CD8-positive, alpha-beta memory T cell (primary cell): ENCODE measurements at regions of chr4 and their contacts with region 1.

Region 1: DNA sequence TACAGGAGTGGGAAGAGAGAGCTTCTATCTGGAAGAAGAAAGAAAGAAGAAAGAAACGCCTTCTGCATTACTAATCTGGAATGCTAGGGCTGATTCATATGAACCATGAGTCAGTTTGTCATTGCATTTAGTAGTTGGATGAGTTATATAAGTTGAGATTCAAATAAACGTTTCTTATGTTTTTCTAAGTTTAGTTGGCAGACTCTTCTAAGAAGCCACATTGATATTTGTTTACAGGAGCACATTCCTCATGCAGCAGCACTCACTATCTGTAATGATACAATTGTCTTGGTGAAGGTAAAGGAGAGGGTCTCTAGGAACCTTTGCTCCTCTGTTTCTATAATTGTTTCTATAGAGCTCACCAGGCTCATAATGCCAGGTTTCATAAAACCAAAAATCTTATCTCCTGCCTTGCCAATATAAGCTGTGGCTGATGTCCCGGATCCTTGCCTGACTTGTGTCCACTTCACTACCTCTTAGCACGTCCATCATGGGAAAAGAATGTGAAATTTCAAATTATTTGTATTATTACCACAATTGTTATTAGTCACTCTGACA is 39.5 kb downstream of the HOPX start:
- DNase-seq: no peak
- H3K4me3 ChIP-seq: no peak overlapping the region
- H3K4me3 Mint-ChIP-seq: peak overlapping the region in 1 of 7 donors; percentile 74
- H3K27ac ChIP-seq: no peak overlapping the region
- H3K27ac Mint-ChIP-seq: no peak overlapping the region
- H3K4me1 ChIP-seq: no peaks in the 10 kb centered on the region
- H3K4me1 Mint-ChIP-seq: peaks cover 13 to 19% (median 16%) of the 10 kb centered on the region in 3 donors
- H3K27me3 ChIP-seq: no peaks in the 10 kb centered on the region
- H3K27me3 Mint-ChIP-seq: no peaks in the 10 kb centered on the region

Region 2: DNA sequence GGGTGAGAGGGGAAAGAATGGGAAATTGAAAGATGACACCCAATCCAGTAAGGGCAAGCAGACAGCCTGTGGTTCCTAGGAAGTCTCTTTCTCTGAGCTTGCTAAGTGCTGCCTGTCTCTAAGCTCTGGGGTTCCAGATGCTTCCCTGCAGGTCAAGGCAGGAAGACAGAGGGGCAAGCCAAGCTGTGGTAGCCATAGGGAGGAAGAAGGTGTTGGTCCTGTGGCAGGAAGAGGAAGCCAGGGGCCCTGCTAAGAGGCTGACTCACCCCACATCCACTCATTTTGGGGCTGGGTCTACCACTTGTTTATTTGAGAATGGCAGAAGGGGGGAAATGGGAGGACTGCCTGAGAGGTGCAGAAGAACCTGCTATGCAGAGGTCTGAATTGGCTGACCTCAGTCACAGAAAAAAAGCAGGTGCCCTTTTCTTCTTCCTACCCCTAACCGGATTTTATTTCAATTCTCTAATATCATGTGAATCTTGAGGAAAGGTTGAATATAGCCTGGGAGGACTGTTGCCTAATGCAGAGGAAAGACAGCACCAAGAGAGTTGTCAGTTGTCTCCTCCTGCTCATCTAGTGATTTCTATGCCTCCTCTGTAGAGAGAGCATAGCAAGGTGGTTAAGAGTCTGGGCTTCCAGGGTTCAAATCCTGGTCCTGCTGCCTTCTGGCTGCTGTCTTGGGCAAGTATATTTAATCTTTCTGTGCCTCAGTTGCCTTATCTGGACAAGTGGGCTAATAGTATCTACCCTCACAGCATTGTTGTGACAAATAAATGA is 12.1 kb after region 1 on chr4:
- CTCF ChIA-PET with region 1: interaction called, 16 read pairs
- POLR2A ChIA-PET with region 1: interaction called, 4 read pairs
- DNase-seq: peak in 2 of 5 donors; percentile 2 to 50
- H3K4me3 ChIP-seq: peak overlapping the region; percentile 16
- H3K4me3 Mint-ChIP-seq: peak overlapping the region; percentile 88 to 97 (median 95)
- H3K27ac ChIP-seq: no peak overlapping the region
- H3K27ac Mint-ChIP-seq: peak overlapping the region; percentile 70 to 98 (median 92)
- H3K4me1 ChIP-seq: peaks cover 50% of the 10 kb centered on the region
- H3K4me1 Mint-ChIP-seq: peaks cover 81 to 86% (median 82%) of the 10 kb centered on the region in 3 donors
- H3K27me3 ChIP-seq: no peaks in the 10 kb centered on the region
- H3K27me3 Mint-ChIP-seq: peaks cover 4 to 9% of the 10 kb centered on the region in 2 donors

Region 3: DNA sequence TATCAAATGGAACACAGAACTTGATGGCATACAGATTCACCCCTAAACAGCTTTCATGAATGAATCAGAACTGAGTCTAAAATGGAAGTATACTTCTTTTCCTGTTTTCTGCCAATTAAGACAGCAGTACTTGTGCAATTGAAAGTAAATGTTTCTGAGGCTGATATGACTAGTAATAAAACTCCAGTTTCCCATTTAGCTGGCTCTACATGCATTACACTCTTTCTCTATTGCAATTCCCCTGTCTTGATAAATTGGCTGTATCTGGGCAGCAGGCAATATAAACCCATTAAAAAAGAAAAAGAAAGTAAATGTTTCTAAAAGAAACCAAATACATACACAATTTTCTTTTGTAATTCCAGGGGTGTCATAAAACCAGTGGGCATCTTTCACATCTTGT is 331.2 kb after region 1 on chr4:
- CTCF ChIA-PET with region 1: no interaction called
- POLR2A ChIA-PET with region 1: no interaction called
- DNase-seq: no peak
- H3K4me3 ChIP-seq: no peak overlapping the region
- H3K4me3 Mint-ChIP-seq: peak overlapping the region in 1 of 7 donors; percentile 49
- H3K27ac ChIP-seq: no peak overlapping the region
- H3K27ac Mint-ChIP-seq: no peak overlapping the region
- H3K4me1 ChIP-seq: peaks cover 24% of the 10 kb centered on the region
- H3K4me1 Mint-ChIP-seq: peaks cover 35 to 52% (median 37%) of the 10 kb centered on the region in 3 donors
- H3K27me3 ChIP-seq: no peaks in the 10 kb centered on the region
- H3K27me3 Mint-ChIP-seq: no peaks in the 10 kb centered on the region